MCF 10A (cell line): ENCODE measurements at regions of chr13 and their contacts with region 1.

Region 1: DNA sequence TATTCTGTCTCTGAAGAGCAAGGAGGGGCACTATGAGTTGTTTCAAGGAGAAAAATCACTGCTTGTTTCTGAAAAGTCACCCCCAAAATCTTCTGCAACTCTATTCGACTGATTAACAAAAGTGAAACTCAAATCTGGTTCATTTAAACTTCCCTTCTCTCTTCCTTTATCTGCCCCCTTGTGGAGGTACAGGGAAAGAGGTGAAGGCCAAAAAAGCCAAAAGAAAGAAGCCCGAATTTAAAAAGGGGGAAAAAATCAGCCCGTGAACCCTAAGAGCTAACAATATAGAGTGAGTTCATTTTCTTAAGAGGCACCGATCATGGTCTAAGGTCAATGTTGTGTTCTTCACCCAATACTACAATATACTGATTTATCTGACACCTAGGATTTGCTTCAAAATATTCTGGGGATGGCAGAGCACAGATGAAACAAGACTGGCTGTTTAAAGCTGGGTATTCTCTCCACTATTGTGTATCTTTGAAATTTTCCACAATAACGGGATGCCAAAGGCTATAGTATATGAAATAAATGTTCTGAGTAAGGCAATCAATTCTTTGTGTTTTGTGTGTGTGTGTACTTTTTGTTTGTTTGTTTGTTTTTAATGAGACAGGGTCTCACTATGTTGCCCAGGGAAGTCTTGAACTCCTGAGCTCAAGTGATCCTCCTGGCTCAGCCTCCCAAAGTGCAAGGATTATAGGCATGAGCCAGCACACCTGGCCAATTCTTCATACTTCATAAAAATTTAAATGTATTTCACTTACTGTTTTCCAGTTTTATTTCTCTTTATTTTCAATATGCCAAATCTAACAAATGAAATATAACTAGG is 55.0 kb upstream of the EEF1AKMT1 start:
- DNase-seq: peak; percentile 76
- H3K4me3 Mint-ChIP-seq: peak overlapping the region; percentile 60
- H3K27ac Mint-ChIP-seq: peak overlapping the region; percentile 73
- H3K4me1 Mint-ChIP-seq: peaks cover 6% of the 10 kb centered on the region
- H3K27me3 Mint-ChIP-seq: no peaks in the 10 kb centered on the region
- CTCF ChIP-seq: peak; percentile 65

Region 2: GRCh38 chr13:20197361-20197834 is 631.4 kb before region 1 on chr13:
- CTCF ChIA-PET with region 1: interaction called, 10 read pairs
- POLR2A ChIA-PET with region 1: no interaction called
- intact Hi-C with region 1: loop called (anchors 2 kb)
- DNase-seq: peak; percentile 59
- H3K4me3 Mint-ChIP-seq: no peak overlapping the region
- H3K27ac Mint-ChIP-seq: no peak overlapping the region
- H3K4me1 Mint-ChIP-seq: peaks cover 24% of the 10 kb centered on the region
- H3K27me3 Mint-ChIP-seq: no peaks in the 10 kb centered on the region
- CTCF ChIP-seq: peak; percentile 67

Region 3: DNA sequence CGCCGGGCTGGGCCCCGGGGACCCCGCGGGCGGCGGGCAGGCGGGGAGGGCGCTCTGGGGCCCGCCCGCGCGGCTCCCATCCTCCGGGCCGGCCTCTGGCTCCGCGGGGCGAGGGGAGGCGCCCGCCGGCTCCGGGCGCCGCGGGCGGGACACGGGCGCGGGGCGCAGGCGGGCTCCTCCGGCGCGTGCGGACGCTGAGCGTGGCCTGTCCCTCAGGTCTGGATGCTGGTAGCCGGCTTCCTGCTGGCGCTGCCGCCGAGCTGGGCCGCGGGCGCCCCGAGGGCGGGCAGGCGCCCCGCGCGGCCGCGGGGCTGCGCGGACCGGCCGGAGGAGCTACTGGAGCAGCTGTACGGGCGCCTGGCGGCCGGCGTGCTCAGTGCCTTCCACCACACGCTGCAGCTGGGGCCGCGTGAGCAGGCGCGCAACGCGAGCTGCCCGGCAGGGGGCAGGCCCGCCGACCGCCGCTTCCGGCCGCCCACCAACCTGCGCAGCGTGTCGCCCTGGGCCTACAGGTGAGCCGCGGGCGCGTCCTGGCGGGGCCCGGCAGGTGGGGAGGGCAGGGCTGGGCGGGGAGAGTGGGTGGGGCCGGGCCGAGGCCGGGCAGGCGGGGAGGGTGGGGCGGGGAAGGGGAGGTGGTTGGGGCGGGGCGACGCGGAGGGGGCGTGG is 124.8 kb before region 1 on chr13:
- CTCF ChIA-PET with region 1: interaction called, 60 read pairs
- POLR2A ChIA-PET with region 1: no interaction called
- intact Hi-C with region 1: no loop called
- DNase-seq: peak; percentile 64
- H3K4me3 Mint-ChIP-seq: peak overlapping the region; percentile 77
- H3K27ac Mint-ChIP-seq: no peak overlapping the region
- H3K4me1 Mint-ChIP-seq: peaks cover under 1% of the 10 kb centered on the region
- H3K27me3 Mint-ChIP-seq: no peaks in the 10 kb centered on the region
- CTCF ChIP-seq: peak; percentile 52

Region 4: DNA sequence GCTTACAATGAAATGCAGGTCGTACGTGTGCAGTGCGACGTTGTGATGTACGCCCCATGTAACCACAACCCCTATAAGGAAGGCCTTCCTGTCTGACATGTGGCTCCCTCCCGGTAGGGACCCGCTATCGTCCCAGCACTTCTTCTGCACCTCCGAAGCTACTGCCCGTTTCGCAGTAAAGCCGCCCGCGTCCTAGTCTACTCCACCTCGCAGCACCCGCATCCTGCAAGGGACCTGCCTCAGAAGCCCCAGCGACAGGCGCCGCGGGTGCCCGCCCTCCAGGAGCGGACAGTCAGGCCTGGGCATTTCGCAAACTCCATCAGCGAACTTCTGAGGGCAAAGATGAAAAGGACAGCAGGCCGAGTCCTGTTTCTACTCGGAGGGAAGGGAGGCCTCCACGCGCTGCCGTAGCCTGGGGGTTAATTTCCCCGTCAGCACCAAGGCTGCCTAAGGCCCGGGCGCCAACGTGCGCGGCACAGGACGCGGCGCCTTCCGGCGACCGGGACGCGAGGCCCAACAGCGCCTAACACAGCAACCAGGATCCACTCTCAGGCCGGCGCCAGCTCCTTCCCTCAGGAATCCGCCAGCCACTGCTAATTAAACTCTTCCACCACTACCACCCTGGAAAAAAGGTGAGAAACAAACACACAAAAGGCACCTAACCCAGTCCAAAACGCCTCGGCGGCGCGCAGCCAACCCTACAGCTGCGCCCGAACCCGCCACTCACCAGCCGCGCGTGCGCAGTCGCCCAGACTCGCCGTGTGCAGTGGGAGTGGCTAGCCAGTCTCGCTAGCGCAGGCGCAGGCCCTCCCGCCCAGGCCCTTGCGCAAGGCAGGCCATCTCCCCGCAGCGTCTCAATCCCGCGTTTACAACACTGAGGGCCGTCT is 55.3 kb before region 1 on chr13 and contains the start of gene EEF1AKMT1:
- CTCF ChIA-PET with region 1: interaction called, 7 read pairs
- POLR2A ChIA-PET with region 1: interaction called, 11 read pairs
- intact Hi-C with region 1: loop called (anchors 1 kb)
- DNase-seq: peak; percentile 93
- H3K4me3 Mint-ChIP-seq: peak within 1 kb of the TSS; percentile 83
- H3K27ac Mint-ChIP-seq: peak within 1 kb of the TSS; percentile 93
- H3K4me1 Mint-ChIP-seq: peaks cover 6% of the 10 kb centered on the region
- H3K27me3 Mint-ChIP-seq: no peaks in the 10 kb centered on the region
- CTCF ChIP-seq: no peak
- total RNA-seq, gene EEF1AKMT1: 11.3 and 16.5 TPM in 2 replicates

Region 5: GRCh38 chr13:20814224-20814910 is 14.4 kb before region 1 on chr13:
- CTCF ChIA-PET with region 1: interaction called, 51 read pairs
- POLR2A ChIA-PET with region 1: interaction called, 18 read pairs
- intact Hi-C with region 1: no loop called
- DNase-seq: peak; percentile 96
- H3K4me3 Mint-ChIP-seq: peak overlapping the region; percentile 65
- H3K27ac Mint-ChIP-seq: peak overlapping the region; percentile 94
- H3K4me1 Mint-ChIP-seq: peaks cover 43% of the 10 kb centered on the region
- H3K27me3 Mint-ChIP-seq: no peaks in the 10 kb centered on the region
- CTCF ChIP-seq: no peak

Region 6: DNA sequence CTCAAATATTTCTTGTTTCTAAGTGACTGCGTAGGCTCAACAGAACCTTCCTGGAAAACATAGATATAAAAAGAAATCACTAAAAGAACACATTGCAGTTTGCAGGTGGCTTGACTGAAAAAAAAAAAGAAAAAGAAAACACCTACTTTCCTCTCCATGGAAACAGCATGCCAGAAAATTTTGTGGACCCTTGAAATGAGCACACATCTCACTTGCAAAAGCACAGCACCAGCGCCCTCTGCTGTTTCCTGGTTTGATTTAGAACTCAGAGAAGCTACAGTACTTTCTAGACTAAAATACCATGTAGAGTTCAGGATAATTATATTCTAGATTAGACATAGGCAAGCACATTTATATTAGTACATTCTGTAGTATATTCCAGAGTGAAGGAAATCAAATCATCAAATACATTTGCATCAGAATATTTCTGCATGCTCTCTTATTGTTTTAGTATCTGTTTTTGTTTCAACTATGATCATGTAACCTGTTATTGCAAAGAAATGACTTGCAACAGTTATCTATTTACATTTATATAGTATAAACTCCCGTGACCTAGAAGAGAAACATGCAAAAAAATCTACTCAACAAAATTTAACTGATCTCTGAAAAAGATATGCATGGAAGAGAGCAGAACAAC is 96.1 kb after region 1 on chr13:
- CTCF ChIA-PET with region 1: interaction called, 8 read pairs
- POLR2A ChIA-PET with region 1: no interaction called
- intact Hi-C with region 1: loop called (anchors 5 kb)
- DNase-seq: peak; percentile 74
- H3K4me3 Mint-ChIP-seq: no peak overlapping the region
- H3K27ac Mint-ChIP-seq: no peak overlapping the region
- H3K4me1 Mint-ChIP-seq: no peaks in the 10 kb centered on the region
- H3K27me3 Mint-ChIP-seq: no peaks in the 10 kb centered on the region
- CTCF ChIP-seq: peak; percentile 76

Region 7: DNA sequence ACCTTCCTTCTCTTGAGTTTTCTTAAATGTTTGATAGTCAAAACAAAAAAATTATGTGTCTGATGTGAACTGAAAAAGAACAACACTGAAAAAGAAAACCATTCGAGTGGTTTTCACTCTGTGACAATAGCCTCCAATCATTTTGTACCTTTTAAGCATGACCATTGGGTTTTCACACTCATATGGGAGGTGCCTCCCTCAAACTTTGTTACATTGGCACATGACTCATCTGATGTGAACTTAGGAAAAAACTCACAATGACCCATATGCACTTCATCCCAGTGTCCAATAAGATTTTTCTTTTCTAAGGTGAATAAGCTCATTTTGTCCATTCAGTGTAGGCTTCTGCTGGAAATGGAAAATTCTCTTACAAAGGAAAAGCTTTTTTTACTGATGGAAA is 140.4 kb after region 1 on chr13:
- CTCF ChIA-PET with region 1: no interaction called
- POLR2A ChIA-PET with region 1: no interaction called
- intact Hi-C with region 1: no loop called
- DNase-seq: peak; percentile 51
- H3K4me3 Mint-ChIP-seq: no peak overlapping the region
- H3K27ac Mint-ChIP-seq: no peak overlapping the region
- H3K4me1 Mint-ChIP-seq: no peaks in the 10 kb centered on the region
- H3K27me3 Mint-ChIP-seq: no peaks in the 10 kb centered on the region
- CTCF ChIP-seq: no peak

Region 8: DNA sequence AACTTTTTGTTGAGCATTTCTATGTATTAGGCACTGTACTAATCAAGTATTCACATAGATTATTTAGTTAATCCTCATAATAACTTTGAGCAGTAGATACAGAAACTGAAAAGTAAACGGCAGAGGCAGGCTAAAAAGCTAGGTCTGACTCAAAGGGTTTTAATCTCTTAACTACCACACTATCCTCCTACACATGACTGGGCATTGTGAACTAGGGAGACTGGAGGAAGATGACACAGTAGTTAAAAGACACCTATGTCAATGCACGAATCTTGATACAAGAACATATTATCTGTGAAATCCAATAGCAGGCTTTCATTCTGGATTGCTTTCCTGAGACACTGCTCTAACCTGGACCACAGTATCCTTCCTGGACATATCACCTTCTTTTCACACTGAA is 739.0 kb after region 1 on chr13:
- CTCF ChIA-PET with region 1: no interaction called
- POLR2A ChIA-PET with region 1: no interaction called
- intact Hi-C with region 1: no loop called
- DNase-seq: no peak
- H3K4me3 Mint-ChIP-seq: no peak overlapping the region
- H3K27ac Mint-ChIP-seq: no peak overlapping the region
- H3K4me1 Mint-ChIP-seq: peaks cover 5% of the 10 kb centered on the region
- H3K27me3 Mint-ChIP-seq: no peaks in the 10 kb centered on the region
- CTCF ChIP-seq: no peak